Transverse colon (tissue), 4 donors: ENCODE measurements at regions of chr14 and their contacts with region 1.

Region 1: GRCh38 chr14:103808403-103809001 is 38.9 kb downstream of the PPP1R13B start:
- DNase-seq: peak; percentile 78
- H3K4me3 ChIP-seq: no peak overlapping the region
- H3K27ac ChIP-seq: no peak overlapping the region
- H3K4me1 ChIP-seq: peaks cover 0 to 3% (median 1%) of the 10 kb centered on the region in 4 donors
- H3K27me3 ChIP-seq: no peaks in the 10 kb centered on the region
- CTCF ChIP-seq: peak; percentile 81 to 89 (median 85)
- EP300 ChIP-seq: no peak
- POLR2A ChIP-seq: no peak

Region 2: DNA sequence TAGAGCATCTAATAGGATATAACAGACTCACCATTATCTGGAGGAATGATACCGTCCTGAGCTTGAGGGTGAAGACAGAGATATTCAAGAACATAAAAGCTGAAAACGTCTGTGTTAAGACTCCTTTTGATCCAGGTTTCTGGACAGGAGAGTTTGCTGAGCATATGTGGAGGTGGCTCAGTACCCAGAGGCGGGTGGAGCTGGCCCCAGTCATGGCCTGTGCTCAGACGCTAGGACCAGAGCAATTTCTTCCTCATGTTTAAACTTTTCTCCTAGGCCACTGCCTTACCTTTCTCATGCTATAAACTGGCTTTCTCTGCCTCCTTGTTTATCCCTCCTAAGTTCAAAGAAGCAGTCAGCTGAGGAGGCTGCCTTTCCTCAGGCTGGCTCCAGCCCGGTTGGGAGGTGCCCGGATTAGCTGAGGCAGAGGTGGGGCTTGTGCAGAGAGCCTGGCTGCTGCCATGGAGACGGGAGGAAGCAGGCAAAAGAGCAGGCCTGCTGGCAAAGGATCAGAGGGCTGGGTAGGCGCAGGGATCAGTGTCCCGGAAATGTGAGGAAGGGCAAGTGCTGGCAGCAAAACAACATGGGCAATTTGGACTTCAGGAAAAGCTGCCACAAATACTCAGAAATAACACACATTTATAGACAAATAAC is 232.0 kb before region 1 on chr14:
- in situ Hi-C with region 1: no loop called
- intact Hi-C with region 1: no loop called
- DNase-seq: peak; percentile 95
- H3K4me3 ChIP-seq: no peak overlapping the region
- H3K27ac ChIP-seq: peak overlapping the region; percentile 82 to 90 (median 86)
- H3K4me1 ChIP-seq: peaks cover 16 to 40% (median 29%) of the 10 kb centered on the region in 4 donors
- H3K27me3 ChIP-seq: no peaks in the 10 kb centered on the region
- CTCF ChIP-seq: no peak
- EP300 ChIP-seq: peak; percentile 5
- POLR2A ChIP-seq: peak; percentile 12

Region 3: GRCh38 chr14:103994535-103995182 is 186.2 kb after region 1 on chr14:
- in situ Hi-C with region 1: loop called in 3 of 4 experiments (anchors 10 to 25 kb)
- intact Hi-C with region 1: loop called (anchors 10 kb)
- DNase-seq: no peak
- H3K4me3 ChIP-seq: no peak overlapping the region
- H3K27ac ChIP-seq: no peak overlapping the region
- H3K4me1 ChIP-seq: no peaks in the 10 kb centered on the region
- H3K27me3 ChIP-seq: peaks cover 34% of the 10 kb centered on the region
- CTCF ChIP-seq: no peak
- EP300 ChIP-seq: no peak
- POLR2A ChIP-seq: no peak